ENCODE measurements at regions of chr11 and their contacts with region 1.

Region 1: GRCh38 chr11:86869966-86870570 is 69.7 kb downstream of the PRSS23 start:
- DNase-seq: peak; percentile 48
- CTCF ChIP-seq: peak; percentile 62

Region 2: DNA sequence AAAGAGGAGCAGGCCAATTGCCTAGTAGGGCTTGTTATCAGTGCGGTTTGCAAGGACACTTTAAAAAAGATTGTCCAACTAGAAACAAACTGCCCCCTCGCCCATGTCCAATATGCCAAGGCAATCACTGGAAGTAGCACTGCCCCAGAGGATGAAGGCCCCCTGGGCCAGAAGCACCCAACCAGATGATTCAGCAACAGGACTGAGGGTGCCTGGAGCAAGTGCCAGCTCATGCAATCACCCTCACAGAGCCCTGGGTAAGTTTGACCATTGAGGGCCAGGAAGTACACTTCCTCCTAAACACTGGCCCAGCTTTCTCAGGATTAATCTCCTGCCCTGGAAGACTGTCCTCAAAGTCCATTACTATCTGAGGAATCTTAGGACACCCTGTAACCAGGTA is 21.2 kb before region 1 on chr11:
- CTCF ChIA-PET with region 1: interaction called, 13 read pairs
- POLR2A ChIA-PET with region 1: no interaction called
- DNase-seq: no peak
- CTCF ChIP-seq: no peak

Region 3: DNA sequence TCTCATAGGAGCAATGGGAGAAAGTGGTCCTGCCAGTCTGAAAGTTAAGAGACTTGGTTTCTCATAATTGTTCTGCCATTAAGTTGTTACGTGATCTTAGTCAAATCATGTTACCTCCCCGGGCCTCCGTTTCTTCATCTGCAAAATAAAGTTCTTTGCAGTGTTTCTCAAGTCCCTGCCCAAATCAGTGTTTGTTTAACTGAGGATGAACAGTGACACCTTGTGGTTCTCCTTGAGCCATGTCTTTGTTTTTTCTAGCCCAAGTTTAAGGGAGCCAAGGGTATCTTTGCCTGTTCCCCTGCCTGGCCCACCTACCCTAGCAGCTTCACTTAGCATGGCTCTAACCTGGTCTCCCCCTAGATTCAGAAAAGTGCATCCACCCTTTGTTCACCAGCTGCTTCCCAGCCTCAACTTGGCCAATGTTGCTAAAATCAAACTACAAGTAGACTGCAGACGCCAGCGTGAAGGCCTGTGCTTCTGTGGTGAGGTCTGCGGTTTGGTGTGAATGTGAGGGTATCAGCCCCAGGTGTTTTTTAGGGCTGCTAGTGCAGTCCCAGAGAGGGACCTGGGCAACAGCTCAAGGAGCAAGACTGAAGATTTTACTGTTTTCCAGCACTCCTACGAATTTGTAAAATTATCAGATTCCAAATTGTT is 49.6 kb after region 1 on chr11:
- CTCF ChIA-PET with region 1: interaction called, 11 read pairs
- POLR2A ChIA-PET with region 1: no interaction called
- DNase-seq: peak; percentile 44
- CTCF ChIP-seq: peak; percentile 47